Body of pancreas (tissue), 4 donors: ENCODE measurements at regions of chrX and their contacts with region 1.

Region 1: GRCh38 chrX:8738588-8739189 is 6.8 kb upstream of the ANOS1 start:
- DNase-seq: peak; percentile 20 to 63 (median 38)
- ATAC-seq: peak; percentile 47
- H3K4me3 ChIP-seq: no peak overlapping the region
- H3K27ac ChIP-seq: no peak overlapping the region
- H3K4me1 ChIP-seq: no peaks in the 10 kb centered on the region
- H3K27me3 ChIP-seq: no peaks in the 10 kb centered on the region
- CTCF ChIP-seq: peak; percentile 13 to 61 (median 47)
- POLR2A ChIP-seq: no peak

Region 2: GRCh38 chrX:7996414-7996813 is 742.3 kb before region 1 on chrX:
- intact Hi-C with region 1: loop called (anchors 5 kb)
- DNase-seq: peak; percentile 17 to 50 (median 18)
- ATAC-seq: no peak
- H3K4me3 ChIP-seq: no peak overlapping the region
- H3K27ac ChIP-seq: no peak overlapping the region
- H3K4me1 ChIP-seq: no peaks in the 10 kb centered on the region
- H3K27me3 ChIP-seq: no peaks in the 10 kb centered on the region
- CTCF ChIP-seq: peak; percentile 24 to 74 (median 50)
- POLR2A ChIP-seq: no peak